Heart right ventricle (tissue), 16 donors: ENCODE measurements at regions of chr12 and their contacts with region 1.

Region 1: GRCh38 chr12:84136862-84137367 is 775.7 kb downstream of the SLC6A15 start:
- DNase-seq: no peak
- ATAC-seq: no peak
- H3K4me3 ChIP-seq: no peak overlapping the region
- H3K27ac ChIP-seq: no peak overlapping the region
- H3K4me1 ChIP-seq: no peaks in the 10 kb centered on the region
- H3K27me3 ChIP-seq: no peaks in the 10 kb centered on the region
- CTCF ChIP-seq: no peak

Region 2: GRCh38 chr12:82361461-82361915 is 1775.4 kb before region 1 on chr12:
- intact Hi-C with region 1: loop called in 1 of 10 experiments (anchors 5 kb)
- DNase-seq: peak in 1 of 2 donors; percentile 17
- ATAC-seq: no peak
- H3K4me3 ChIP-seq: no peak overlapping the region
- H3K27ac ChIP-seq: no peak overlapping the region
- H3K4me1 ChIP-seq: peaks cover 0 to 51% (median 29%) of the 10 kb centered on the region in 9 donors
- H3K27me3 ChIP-seq: no peaks in the 10 kb centered on the region
- CTCF ChIP-seq: no peak